ENCODE measurements at regions of chr12 and their contacts with region 1.

Region 1: DNA sequence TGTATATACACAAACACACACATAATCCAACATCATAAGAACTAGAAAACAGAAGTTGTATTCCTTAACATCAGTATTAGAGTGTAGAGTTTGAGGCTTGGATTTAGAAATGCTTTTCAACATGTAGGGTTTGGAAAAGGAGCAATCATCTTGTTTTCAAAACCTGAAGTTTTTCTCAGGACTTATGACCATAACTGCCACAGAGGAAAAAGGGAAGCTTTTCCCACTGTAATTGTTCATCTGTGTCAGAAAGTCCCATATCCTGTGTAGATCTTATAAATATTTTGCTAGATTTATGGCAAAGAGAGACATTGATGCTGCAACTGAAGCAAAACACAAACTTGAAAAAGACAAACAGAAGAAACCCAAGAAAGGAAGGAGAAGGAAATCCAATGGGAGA is 115.7 kb downstream of the GRIP1 start:
- DNase-seq: no peak
- ATAC-seq: no peak

Region 2: GRCh38 chr12:66647034-66647691 is 83.9 kb after region 1 on chr12:
- intact Hi-C with region 1: no loop called
- DNase-seq: no peak
- ATAC-seq: no peak

Region 3: DNA sequence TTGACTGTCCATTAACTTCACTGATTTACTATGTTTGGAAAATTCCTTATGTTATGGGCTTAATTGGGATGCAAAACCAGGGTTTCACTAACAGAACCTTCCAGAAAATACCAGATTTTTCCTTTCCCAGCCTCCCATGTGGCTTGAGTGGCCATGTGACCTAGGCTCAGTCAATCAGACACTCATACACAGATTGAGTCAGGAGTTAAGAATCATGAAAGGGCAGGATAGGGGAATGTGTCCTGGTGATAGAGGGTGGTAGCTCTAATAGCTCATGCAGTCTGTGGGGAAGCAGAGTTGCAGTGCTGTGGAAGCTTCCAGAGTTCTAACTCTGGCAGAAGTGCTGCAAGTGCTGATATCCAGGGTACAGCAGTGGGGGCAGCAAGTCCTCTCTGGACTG is 1291.9 kb after region 1 on chr12:
- intact Hi-C with region 1: loop called (anchors 10 kb)
- DNase-seq: no peak
- ATAC-seq: no peak